ENCODE measurements at regions of chr14 and their contacts with region 1.

Region 1: DNA sequence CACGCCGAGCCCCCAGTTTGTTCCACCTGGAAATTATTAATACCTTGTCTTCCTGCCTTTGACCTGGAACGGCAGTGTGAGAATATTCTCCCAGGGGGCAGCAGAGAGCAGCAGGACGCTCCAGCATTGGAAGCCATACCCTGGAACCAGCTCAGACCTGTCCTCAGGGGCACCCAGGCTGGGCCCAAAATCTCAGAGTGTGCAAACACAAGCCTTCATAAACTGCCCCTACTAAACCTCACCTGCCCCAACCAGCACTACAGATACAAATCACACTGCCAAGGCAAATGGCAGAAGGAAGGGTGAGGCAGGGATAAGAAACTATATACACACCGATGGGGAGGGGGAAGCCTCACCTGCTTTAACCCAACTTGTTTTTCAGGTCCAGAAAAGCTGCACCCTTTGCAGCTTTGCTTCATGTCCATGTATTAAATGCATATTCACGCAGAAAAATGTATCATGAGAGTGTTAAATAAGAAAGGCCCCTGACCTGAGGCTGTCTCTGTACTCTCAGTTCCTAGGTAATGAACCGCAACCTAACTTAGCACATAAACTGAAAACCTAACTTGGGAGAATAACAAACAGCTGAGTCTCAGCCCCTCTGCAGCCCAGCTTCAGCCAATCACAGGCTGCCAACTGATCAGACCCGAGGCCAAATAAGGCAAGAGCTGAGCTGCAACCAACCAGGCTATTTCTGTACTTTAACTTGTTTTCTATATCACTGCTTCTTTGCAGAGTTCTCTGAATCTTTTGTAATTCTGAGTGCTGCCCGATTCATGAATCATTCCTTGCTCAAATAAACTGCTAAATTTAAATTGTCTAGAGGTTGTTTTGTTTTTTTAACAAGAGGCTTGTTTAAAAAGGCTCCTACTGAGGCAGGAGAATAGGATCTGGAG is 130.1 kb downstream of the SPTSSA start:
- DNase-seq: peak; percentile 95
- ATAC-seq: peak; percentile 95
- H3K4me3 ChIP-seq: peak overlapping the region; percentile 53 to 71 (median 57)
- H3K27ac ChIP-seq: peak overlapping the region; percentile 63
- H3K4me1 ChIP-seq: peaks cover 41% of the 10 kb centered on the region
- H3K27me3 ChIP-seq: no peaks in the 10 kb centered on the region
- CTCF ChIP-seq: peak; percentile 99
- EP300 ChIP-seq: no peak; a peak in 2 of 4 replicates
- POLR2A ChIP-seq: peak; percentile 39 to 45; a peak in 3 of 4 replicates
- RAD21 ChIP-seq: peak; percentile 97

Region 2: DNA sequence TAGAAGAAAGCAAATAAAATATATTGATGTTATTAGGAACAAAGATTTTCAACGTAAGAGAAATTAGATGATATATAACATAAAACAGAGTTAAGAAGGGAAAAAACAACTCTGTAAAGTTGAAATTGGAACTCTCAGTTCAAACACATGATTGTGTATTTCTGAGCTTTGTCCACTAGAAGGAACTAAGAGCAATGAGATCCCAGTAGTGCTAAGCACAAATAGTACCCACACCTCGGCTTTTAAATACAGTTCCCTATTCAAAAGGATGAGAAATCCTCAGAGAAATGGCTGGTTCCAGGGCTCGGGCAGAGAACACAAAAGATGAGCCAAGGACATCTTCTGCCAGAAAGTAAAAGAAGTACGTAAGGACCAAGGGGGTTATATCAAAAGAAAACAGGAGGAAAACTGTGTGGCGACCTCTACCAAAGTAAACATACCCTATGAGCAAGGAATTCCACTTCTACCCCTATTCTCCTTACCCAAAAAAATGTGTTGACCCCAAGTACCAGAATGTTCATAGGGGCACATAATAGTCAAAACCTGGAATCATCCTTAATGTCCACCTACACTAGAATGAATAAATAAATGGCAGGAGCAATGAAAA is 33.4 kb after region 1 on chr14:
- CTCF ChIA-PET with region 1: interaction called, 4 read pairs
- POLR2A ChIA-PET with region 1: interaction called, 6 read pairs
- in situ Hi-C with region 1: no loop called
- intact Hi-C with region 1: loop called (anchors 1 kb)
- DNase-seq: peak; percentile 59
- ATAC-seq: peak; percentile 75
- H3K4me3 ChIP-seq: peak overlapping the region in 1 of 3 experiments; percentile 1; a peak in 1 of 6 replicates
- H3K27ac ChIP-seq: no peak overlapping the region
- H3K4me1 ChIP-seq: peaks cover 35% of the 10 kb centered on the region
- H3K27me3 ChIP-seq: peaks cover 0 to 2% of the 10 kb centered on the region in 2 experiments; a peak in 1 of 5 replicates
- CTCF ChIP-seq: peak; percentile 62
- EP300 ChIP-seq: no peak
- POLR2A ChIP-seq: no peak
- RAD21 ChIP-seq: peak; percentile 55; the same call in 1 of the 2 replicates

Region 3: GRCh38 chr14:34461334-34462131 is 129.6 kb after region 1 on chr14:
- CTCF ChIA-PET with region 1: no interaction called
- POLR2A ChIA-PET with region 1: interaction called, 28 read pairs
- in situ Hi-C with region 1: no loop called
- intact Hi-C with region 1: loop called (anchors 1 kb)
- DNase-seq: peak; percentile 89
- ATAC-seq: peak; percentile 75
- H3K4me3 ChIP-seq: peak overlapping the region; percentile 68 to 94 (median 73)
- H3K27ac ChIP-seq: peak overlapping the region; percentile 77
- H3K4me1 ChIP-seq: peaks cover 72% of the 10 kb centered on the region
- H3K27me3 ChIP-seq: no peaks in the 10 kb centered on the region; a peak in 1 of 5 replicates
- CTCF ChIP-seq: 0 out of 2 replicates have a peak, but pooled peaks have one; percentile 23
- EP300 ChIP-seq: no peak; a peak in 2 of 4 replicates
- POLR2A ChIP-seq: peak in 1 of 2 experiments; percentile 86; a peak in 2 of 4 replicates
- RAD21 ChIP-seq: no peak; the same call in 1 of the 2 replicates

Region 4: DNA sequence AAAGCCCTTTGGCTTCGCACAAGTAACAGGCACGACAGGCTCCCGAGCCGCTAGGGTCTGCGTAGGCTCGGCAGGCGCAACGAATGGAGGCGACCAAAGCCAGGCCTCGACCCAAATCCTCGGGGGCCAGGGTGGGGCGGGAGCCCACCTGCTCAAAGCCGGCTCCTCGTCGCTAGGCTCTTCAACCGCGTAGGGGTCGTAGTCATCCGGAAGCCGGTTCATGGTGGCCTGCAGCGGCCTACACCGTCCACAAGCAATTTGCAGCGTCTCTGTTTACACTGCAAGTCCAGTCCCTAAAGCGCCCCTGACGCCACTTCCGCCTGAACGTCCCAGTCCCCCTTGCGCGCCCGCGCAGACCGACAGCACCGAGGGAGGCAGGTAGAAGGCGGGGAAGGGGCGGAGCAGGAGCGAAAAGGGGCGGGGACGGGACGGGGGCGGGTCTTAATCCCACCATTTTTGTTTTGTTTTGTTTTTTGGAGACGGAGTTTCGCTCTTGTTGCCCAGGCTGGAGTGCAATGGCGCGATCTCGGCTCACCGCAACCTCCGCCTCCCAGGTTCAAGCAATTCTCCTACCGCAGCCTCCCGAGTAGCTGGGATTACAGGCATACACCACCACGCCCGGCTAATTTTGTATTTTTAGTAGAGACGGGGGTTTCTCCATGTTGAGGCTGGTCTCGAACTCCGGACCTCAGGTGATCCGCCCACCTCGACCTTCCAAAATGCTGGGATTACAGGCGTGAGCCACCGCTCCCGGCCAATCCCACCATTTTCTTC is 207.6 kb after region 1 on chr14 and contains the start of gene EAPP:
- CTCF ChIA-PET with region 1: interaction called, 3 read pairs
- POLR2A ChIA-PET with region 1: interaction called, 17 read pairs
- in situ Hi-C with region 1: no loop called
- intact Hi-C with region 1: loop called (anchors 5 kb)
- DNase-seq: peak; percentile 100
- ATAC-seq: peak; percentile 96
- H3K4me3 ChIP-seq: peak within 1 kb of the TSS; percentile 86 to 99 (median 92)
- H3K27ac ChIP-seq: peak within 1 kb of the TSS; percentile 95
- H3K4me1 ChIP-seq: peaks cover 25% of the 10 kb centered on the region
- H3K27me3 ChIP-seq: peaks cover 0 to 4% of the 10 kb centered on the region in 2 experiments; a peak in 1 of 5 replicates
- CTCF ChIP-seq: peak; percentile 51
- EP300 ChIP-seq: peak; percentile 65 to 77; a peak in 3 of 4 replicates
- POLR2A ChIP-seq: peak; percentile 99
- RAD21 ChIP-seq: peak; percentile 79
- total RNA-seq, gene EAPP: 110 and 163 TPM in 2 replicates

Region 5: DNA sequence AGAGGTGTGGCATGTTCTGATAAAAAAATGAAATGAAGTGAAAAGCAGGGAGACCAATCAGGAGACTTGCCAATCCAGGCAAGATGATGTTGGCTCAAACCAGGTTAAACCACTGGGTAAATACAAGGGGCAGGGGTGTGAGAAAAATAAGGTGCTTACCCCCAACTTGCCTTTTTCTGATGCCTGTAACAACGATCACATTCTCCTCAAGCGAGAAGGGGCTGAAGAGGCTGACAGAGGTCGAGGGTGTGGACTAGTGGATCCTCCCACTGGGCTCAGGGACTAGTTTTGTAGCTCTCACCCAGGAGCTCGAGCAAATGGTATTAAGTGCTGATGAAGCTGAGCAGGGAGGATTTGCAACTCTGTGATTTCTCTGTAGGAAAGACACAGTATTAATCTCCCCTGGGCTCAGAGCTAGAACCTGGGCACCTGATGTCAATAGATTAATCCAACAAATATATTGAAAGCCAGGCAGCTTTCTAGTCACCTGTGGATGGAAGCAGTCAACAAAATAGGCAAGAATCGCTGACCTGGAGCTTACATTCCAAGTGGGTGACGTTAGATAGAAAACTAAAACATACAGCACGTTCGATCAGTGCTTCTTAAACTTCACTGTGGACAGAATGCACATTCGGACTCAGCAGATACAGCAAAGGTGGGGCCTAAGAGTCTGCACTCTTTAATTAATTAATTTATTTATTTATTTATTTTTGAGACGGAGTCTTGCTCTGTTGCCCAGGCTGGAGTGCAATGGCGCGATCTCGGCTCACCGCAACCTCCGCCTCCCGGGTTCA is 222.8 kb after region 1 on chr14:
- CTCF ChIA-PET with region 1: no interaction called
- POLR2A ChIA-PET with region 1: interaction called, 13 read pairs
- in situ Hi-C with region 1: no loop called
- intact Hi-C with region 1: no loop called
- DNase-seq: no peak
- ATAC-seq: no peak
- H3K4me3 ChIP-seq: peak overlapping the region; percentile 0 to 47 (median 20); a peak in 4 of 6 replicates
- H3K27ac ChIP-seq: peak overlapping the region; percentile 37
- H3K4me1 ChIP-seq: peaks cover 14% of the 10 kb centered on the region
- H3K27me3 ChIP-seq: no peaks in the 10 kb centered on the region
- CTCF ChIP-seq: no peak
- EP300 ChIP-seq: no peak
- POLR2A ChIP-seq: peak in 1 of 2 experiments; percentile 64; a peak in 2 of 4 replicates
- RAD21 ChIP-seq: no peak

Region 6: GRCh38 chr14:34593740-34594375 is 261.9 kb after region 1 on chr14:
- CTCF ChIA-PET with region 1: no interaction called
- POLR2A ChIA-PET with region 1: no interaction called
- in situ Hi-C with region 1: no loop called
- intact Hi-C with region 1: no loop called
- DNase-seq: no peak
- ATAC-seq: no peak
- H3K4me3 ChIP-seq: no peak overlapping the region
- H3K27ac ChIP-seq: no peak overlapping the region
- H3K4me1 ChIP-seq: no peaks in the 10 kb centered on the region
- H3K27me3 ChIP-seq: no peaks in the 10 kb centered on the region
- CTCF ChIP-seq: no peak
- EP300 ChIP-seq: no peak
- POLR2A ChIP-seq: no peak
- RAD21 ChIP-seq: no peak